Heart left ventricle (tissue), 16 donors: ENCODE measurements at regions of chr5 and their contacts with region 1.

Region 1: GRCh38 chr5:127030259-127031146 is at the start of gene MARCHF3:
- DNase-seq: peak; percentile 95 to 98 (median 97)
- ATAC-seq: peak; percentile 98 to 99 (median 99)
- H3K4me3 ChIP-seq: peak within 1 kb of the TSS; percentile 69 to 97 (median 90)
- H3K27ac ChIP-seq: peak within 1 kb of the TSS; percentile 73 to 96 (median 92)
- H3K4me1 ChIP-seq: peaks cover 0 to 40% (median 23%) of the 10 kb centered on the region in 12 donors
- H3K27me3 ChIP-seq: no peaks in the 10 kb centered on the region
- CTCF ChIP-seq: peak in 8 of 12 donors; percentile 10 to 50 (median 36)
- POLR2A ChIP-seq: peak; percentile 52 to 98
- total RNA-seq, gene MARCHF3: 19.9 to 50.3 (median 38.0) TPM

Region 2: DNA sequence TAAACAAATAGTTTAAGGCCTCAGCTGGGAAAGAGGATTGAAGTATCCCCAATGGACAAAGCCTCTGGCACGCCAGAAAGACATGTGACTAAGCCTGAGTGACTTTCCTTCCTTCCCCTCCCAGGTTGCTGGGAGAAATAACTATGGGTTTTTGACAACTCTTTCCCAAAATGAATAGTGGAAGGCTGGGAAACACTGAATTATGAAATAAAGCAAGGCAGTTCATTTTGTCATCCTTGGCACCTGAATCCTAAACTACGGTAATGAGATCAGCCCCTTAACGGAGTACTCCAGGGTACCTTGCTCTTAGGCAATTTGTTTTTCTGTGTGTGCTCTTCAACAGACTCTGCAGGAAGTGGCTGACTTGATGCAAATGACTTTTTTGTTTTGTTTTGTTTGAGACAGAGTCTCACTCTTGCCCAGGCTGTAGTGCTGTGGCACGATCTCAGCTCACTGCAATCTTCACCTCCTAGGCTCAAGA is 178.4 kb before region 1 on chr5:
- intact Hi-C with region 1: loop called in 7 of 10 experiments (anchors 5 to 10 kb)
- DNase-seq: peak in 1 of 5 donors; percentile 23
- ATAC-seq: peak; percentile 19 to 62 (median 48)
- H3K4me3 ChIP-seq: peak overlapping the region in 2 of 12 donors; percentile 11 to 13
- H3K27ac ChIP-seq: peak overlapping the region; percentile 14 to 83 (median 47)
- H3K4me1 ChIP-seq: peaks cover 0 to 56% (median 32%) of the 10 kb centered on the region in 12 donors
- H3K27me3 ChIP-seq: no peaks in the 10 kb centered on the region
- CTCF ChIP-seq: no peak
- POLR2A ChIP-seq: no peak

Region 3: GRCh38 chr5:126917918-126918614 is 112.4 kb before region 1 on chr5:
- intact Hi-C with region 1: loop called in 4 of 10 experiments (anchors 5 kb)
- DNase-seq: no peak
- ATAC-seq: no peak
- H3K4me3 ChIP-seq: no peak overlapping the region
- H3K27ac ChIP-seq: peak overlapping the region in 1 of 12 donors; percentile 30
- H3K4me1 ChIP-seq: peaks cover 9 to 55% (median 33%) of the 10 kb centered on the region in 12 donors
- H3K27me3 ChIP-seq: no peaks in the 10 kb centered on the region
- CTCF ChIP-seq: no peak
- POLR2A ChIP-seq: no peak

Region 4: DNA sequence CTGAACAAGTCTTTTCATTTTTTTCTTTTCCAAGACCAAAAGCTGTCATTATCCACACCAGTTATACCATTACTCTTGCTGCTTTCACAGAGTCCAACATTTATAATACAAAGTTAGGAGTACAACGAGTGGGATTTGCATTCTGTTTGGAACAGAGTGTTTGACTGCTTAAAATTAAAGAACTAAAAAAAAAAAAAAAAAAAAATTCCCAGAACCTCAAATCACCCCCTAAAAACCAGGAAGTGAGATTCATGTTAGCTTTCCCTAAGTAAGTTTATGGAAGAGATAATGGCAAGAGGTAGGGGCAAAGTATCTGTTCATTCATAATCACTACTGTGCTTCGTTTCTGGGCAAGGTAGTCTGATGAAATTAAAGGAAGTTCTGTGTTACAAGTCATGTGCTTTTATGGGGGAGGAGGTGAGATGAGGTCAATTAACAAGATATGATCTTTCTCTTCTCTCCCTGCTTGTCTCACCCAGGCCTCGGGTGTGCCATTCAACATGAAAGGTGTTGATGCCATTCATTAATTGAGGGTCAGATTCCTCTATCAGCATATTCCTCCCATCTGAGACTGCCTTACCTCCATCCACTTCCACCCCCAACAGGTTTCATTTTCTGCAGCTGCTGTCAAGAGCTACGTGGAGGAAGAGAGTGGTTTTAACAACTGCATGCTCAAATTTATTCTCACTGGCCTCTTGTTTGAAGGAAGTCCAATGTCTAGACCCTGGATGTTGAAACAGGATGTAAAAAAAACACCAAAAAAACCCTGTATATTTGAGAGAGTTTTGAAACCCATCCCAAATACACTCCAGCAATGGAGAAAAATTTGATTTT is 58.2 kb before region 1 on chr5:
- intact Hi-C with region 1: loop called in 6 of 10 experiments (anchors 5 to 10 kb)
- DNase-seq: no peak
- ATAC-seq: peak in 1 of 4 donors; percentile 18
- H3K4me3 ChIP-seq: no peak overlapping the region
- H3K27ac ChIP-seq: peak overlapping the region in 9 of 12 donors; percentile 53 to 82 (median 69)
- H3K4me1 ChIP-seq: peaks cover 3 to 54% (median 37%) of the 10 kb centered on the region in 12 donors
- H3K27me3 ChIP-seq: no peaks in the 10 kb centered on the region
- CTCF ChIP-seq: no peak
- POLR2A ChIP-seq: no peak

Region 5: GRCh38 chr5:127072861-127073846 is 42.7 kb after region 1 on chr5 and contains the start of gene C5orf63:
- intact Hi-C with region 1: loop called in 4 of 10 experiments (anchors 2 to 5 kb)
- DNase-seq: peak; percentile 53 to 86 (median 67)
- ATAC-seq: peak; percentile 68 to 96 (median 91)
- H3K4me3 ChIP-seq: peak within 1 kb of the TSS; percentile 28 to 73 (median 64)
- H3K27ac ChIP-seq: peak within 1 kb of the TSS in 10 of 12 donors; percentile 10 to 69 (median 51)
- H3K4me1 ChIP-seq: peaks cover 0 to 39% (median 7%) of the 10 kb centered on the region in 12 donors
- H3K27me3 ChIP-seq: no peaks in the 10 kb centered on the region
- CTCF ChIP-seq: peak in 2 of 12 donors; percentile 15 to 54
- POLR2A ChIP-seq: peak in 1 of 2 donors; percentile 20
- total RNA-seq, gene C5orf63: 1.4 to 14.7 (median 8.4) TPM